ENCODE measurements at regions of chr11 and their contacts with region 1.

Region 1: DNA sequence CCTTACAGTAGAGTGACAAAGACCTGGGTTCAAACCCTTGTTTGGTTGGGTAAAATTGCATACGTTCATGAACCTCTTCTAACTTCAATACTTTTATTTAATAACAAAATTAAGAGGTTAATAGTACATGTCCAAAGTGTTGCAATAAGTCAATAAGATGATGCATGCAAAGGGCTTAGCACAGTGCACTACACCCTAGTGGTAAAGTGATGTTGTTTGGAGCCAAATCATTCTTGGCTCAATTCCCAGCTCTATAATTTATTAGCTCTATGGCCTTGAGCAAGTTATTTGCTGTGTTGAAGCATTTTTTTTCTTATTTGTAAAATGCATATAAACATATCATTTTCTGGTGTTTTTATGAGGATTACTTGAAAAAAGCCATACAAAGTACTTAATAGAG is 945.3 kb downstream of the LRRC4C start:
- DNase-seq: no peak
- ATAC-seq: no peak
- H3K4me3 ChIP-seq: no peak overlapping the region
- H3K27ac ChIP-seq: no peak overlapping the region
- H3K4me1 ChIP-seq: no peaks in the 10 kb centered on the region
- H3K27me3 ChIP-seq: no peaks in the 10 kb centered on the region
- CTCF ChIP-seq: no peak
- POLR2A ChIP-seq: no peak
- RAD21 ChIP-seq: no peak

Region 2: GRCh38 chr11:40360206-40360798 is 153.8 kb before region 1 on chr11:
- CTCF ChIA-PET with region 1: no interaction called
- POLR2A ChIA-PET with region 1: no interaction called
- dilution Hi-C with region 1: no loop called
- in situ Hi-C with region 1: no loop called
- intact Hi-C with region 1: no loop called
- DNase-seq: no peak
- ATAC-seq: no peak
- H3K4me3 ChIP-seq: no peak overlapping the region
- H3K27ac ChIP-seq: no peak overlapping the region
- H3K4me1 ChIP-seq: no peaks in the 10 kb centered on the region
- H3K27me3 ChIP-seq: no peaks in the 10 kb centered on the region; the same call in 1 of the 2 replicates
- CTCF ChIP-seq: no peak
- POLR2A ChIP-seq: no peak
- RAD21 ChIP-seq: no peak

Region 3: GRCh38 chr11:40467771-40468170 is 46.4 kb before region 1 on chr11:
- CTCF ChIA-PET with region 1: no interaction called
- POLR2A ChIA-PET with region 1: no interaction called
- dilution Hi-C with region 1: no loop called
- in situ Hi-C with region 1: no loop called
- intact Hi-C with region 1: loop called (anchors 5 kb)
- DNase-seq: no peak
- ATAC-seq: no peak
- H3K4me3 ChIP-seq: no peak overlapping the region
- H3K27ac ChIP-seq: no peak overlapping the region
- H3K4me1 ChIP-seq: no peaks in the 10 kb centered on the region
- H3K27me3 ChIP-seq: no peaks in the 10 kb centered on the region
- CTCF ChIP-seq: no peak
- POLR2A ChIP-seq: no peak
- RAD21 ChIP-seq: no peak

Measured in IMR-90 (cell line).